Heart right ventricle (tissue), 16 donors: ENCODE measurements at regions of chr9 and their contacts with region 1.

Region 1: DNA sequence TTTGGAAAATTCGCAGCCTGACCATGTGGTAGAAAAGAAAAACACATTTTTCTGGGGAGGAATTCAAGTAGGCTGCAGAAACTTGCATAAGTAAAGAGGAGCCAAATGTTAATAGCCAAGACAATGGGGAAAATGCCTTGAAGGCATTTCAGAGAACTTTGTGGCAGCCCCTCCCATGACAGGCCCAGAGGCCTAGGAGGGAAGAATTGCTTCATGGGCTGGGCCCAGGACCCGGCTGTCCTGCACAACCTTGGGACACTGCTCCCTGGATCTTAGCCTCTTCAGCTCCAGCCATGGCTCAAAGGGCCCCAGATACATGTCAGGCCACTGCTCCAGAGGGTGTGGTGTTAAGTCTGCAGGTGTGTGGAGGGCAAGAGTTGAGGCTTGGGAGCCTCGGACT is 158.6 kb downstream of the OSTF1 start:
- DNase-seq: no peak
- ATAC-seq: no peak
- H3K4me3 ChIP-seq: no peak overlapping the region
- H3K27ac ChIP-seq: no peak overlapping the region
- H3K4me1 ChIP-seq: peaks cover 0 to 6% (median 0%) of the 10 kb centered on the region in 9 donors
- H3K27me3 ChIP-seq: no peaks in the 10 kb centered on the region
- CTCF ChIP-seq: no peak

Region 2: GRCh38 chr9:75624998-75625397 is 378.1 kb after region 1 on chr9:
- intact Hi-C with region 1: no loop called
- DNase-seq: no peak
- ATAC-seq: peak in 5 of 8 donors; percentile 11 to 68 (median 17)
- H3K4me3 ChIP-seq: no peak overlapping the region
- H3K27ac ChIP-seq: no peak overlapping the region
- H3K4me1 ChIP-seq: peaks cover 0 to 9% (median 0%) of the 10 kb centered on the region in 9 donors
- H3K27me3 ChIP-seq: no peaks in the 10 kb centered on the region
- CTCF ChIP-seq: no peak

Region 3: GRCh38 chr9:76691517-76692313 is 1444.8 kb after region 1 on chr9:
- intact Hi-C with region 1: loop called in 1 of 10 experiments (anchors 5 kb)
- DNase-seq: no peak
- ATAC-seq: no peak
- H3K4me3 ChIP-seq: peak overlapping the region in 6 of 10 donors; percentile 13 to 44 (median 21)
- H3K27ac ChIP-seq: peak overlapping the region in 1 of 10 donors; percentile 24
- H3K4me1 ChIP-seq: peaks cover 0 to 43% (median 0%) of the 10 kb centered on the region in 9 donors
- H3K27me3 ChIP-seq: peaks cover 0 to 65% (median 19%) of the 10 kb centered on the region in 7 donors
- CTCF ChIP-seq: no peak